CD8-positive, alpha-beta T cell (primary cell): ENCODE measurements at regions of chr2 and their contacts with region 1.

Region 1: DNA sequence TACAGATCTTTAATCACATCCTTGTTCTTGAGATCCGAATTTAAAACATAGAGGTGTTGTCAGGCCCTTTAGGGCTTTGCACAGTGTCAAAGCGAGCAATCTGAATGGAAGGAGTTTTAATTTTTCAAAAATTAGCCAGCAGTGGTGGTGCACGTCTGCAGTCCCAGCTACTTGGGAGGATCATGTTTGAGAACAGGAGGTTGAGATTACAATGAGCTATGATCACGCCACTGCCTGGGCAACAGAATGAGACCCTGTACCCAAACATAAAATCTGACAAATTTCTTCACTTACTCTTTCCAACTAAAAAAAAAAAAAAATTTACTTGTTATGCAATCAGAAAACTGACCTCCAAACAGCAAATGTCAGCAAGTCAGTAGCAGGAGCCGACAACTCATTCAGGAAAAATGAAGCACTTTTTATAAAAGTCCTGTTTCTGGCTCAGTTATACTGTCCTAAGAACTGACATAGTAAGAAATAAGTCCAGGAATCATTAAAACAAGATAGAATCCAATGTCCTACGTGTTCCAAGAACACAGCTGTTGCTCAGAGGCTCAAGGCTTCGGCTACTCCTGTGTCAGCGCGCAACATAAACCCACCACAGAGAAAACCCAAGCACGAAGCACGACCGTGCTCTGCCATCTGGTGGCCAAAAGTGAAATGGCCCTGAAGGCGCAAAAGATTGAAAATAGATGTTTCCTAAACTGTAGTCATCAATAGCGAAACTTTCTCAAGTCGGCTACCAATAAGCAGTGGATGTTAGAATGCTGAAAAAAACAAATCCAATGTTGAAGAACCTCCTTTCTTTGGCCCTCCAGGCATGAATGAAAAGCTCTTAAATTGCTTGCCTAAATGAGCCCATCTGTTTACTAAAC is 138.1 kb downstream of the INO80D start:
- DNase-seq: peak; percentile 19 to 67 (median 52)
- ATAC-seq: peak; percentile 71
- H3K4me3 ChIP-seq: no peak overlapping the region
- H3K4me3 Mint-ChIP-seq: no peak overlapping the region
- H3K27ac ChIP-seq: no peak overlapping the region
- H3K27ac Mint-ChIP-seq: no peak overlapping the region
- H3K4me1 ChIP-seq: no peaks in the 10 kb centered on the region
- H3K4me1 Mint-ChIP-seq: peaks cover 4% of the 10 kb centered on the region
- H3K27me3 ChIP-seq: peaks cover 0 to 4% of the 10 kb centered on the region in 2 experiments
- H3K27me3 Mint-ChIP-seq: peaks cover 27% of the 10 kb centered on the region
- CTCF ChIP-seq: peak; percentile 80

Region 2: DNA sequence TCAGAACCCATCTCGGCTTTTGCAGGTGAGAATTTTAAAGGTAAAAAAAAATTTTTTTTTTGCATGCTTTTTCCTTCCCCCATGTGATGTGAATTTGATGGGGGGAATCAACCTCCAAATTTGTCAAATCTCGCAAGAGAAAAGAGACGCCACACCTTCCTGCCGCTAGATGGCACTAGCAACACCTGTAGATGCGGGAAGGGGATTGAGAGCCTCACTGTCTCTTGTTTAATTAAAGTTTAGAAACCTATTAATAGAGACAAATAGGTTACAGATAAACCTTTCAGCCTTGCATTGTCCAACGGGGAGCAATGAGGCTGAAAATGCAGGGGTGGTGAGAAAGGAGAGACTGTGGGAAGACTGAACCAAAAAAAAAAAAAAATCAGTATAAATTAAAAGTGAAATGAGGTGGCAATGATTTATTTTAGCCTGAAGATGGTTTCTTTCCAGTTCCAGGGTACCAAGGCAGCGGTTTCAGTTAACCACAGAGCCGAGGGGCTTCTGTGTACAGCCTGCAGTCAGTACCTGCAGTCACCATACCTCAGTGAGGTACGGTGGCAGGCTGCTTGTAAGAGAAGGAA is 181.0 kb before region 1 on chr2:
- CTCF ChIA-PET with region 1: no interaction called
- POLR2A ChIA-PET with region 1: no interaction called
- intact Hi-C with region 1: loop called in 1 of 2 experiments (anchors 5 kb)
- DNase-seq: peak; percentile 7 to 65 (median 48)
- ATAC-seq: no peak
- H3K4me3 ChIP-seq: no peak overlapping the region
- H3K4me3 Mint-ChIP-seq: no peak overlapping the region
- H3K27ac ChIP-seq: no peak overlapping the region
- H3K27ac Mint-ChIP-seq: no peak overlapping the region
- H3K4me1 ChIP-seq: no peaks in the 10 kb centered on the region
- H3K4me1 Mint-ChIP-seq: peaks cover 8% of the 10 kb centered on the region
- H3K27me3 ChIP-seq: no peaks in the 10 kb centered on the region
- H3K27me3 Mint-ChIP-seq: peaks cover 21% of the 10 kb centered on the region
- CTCF ChIP-seq: peak; percentile 84

Region 3: DNA sequence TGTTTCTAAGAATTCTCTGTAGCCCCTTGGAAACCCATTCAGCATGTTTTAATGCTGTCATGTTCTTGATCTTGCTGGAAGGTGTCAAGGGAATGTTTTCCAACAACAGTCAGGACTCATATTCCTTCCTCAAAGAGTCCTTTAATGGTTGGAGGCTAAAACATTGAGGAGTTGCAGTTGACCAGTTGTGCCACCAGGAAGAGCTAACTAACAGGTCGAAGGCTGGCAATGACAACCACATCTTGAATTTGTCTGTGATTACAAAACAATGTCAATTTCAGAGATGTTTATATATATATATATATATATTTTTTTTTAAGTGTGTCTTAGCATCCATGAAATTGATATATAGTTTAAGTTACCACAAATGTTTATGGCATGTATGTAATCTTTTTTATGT is 13.4 kb before region 1 on chr2:
- CTCF ChIA-PET with region 1: interaction called, 46 read pairs
- POLR2A ChIA-PET with region 1: no interaction called
- intact Hi-C with region 1: no loop called
- DNase-seq: no peak
- ATAC-seq: no peak
- H3K4me3 ChIP-seq: no peak overlapping the region
- H3K4me3 Mint-ChIP-seq: no peak overlapping the region
- H3K27ac ChIP-seq: no peak overlapping the region
- H3K27ac Mint-ChIP-seq: no peak overlapping the region
- H3K4me1 ChIP-seq: no peaks in the 10 kb centered on the region
- H3K4me1 Mint-ChIP-seq: no peaks in the 10 kb centered on the region
- H3K27me3 ChIP-seq: no peaks in the 10 kb centered on the region
- H3K27me3 Mint-ChIP-seq: peaks cover 9% of the 10 kb centered on the region
- CTCF ChIP-seq: no peak